Heart left ventricle (tissue), 16 donors: ENCODE measurements at regions of chr3 and their contacts with region 1.

Region 1: GRCh38 chr3:63405882-63406281 is 127.8 kb downstream of the SYNPR start:
- DNase-seq: no peak
- ATAC-seq: no peak
- H3K4me3 ChIP-seq: no peak overlapping the region
- H3K27ac ChIP-seq: no peak overlapping the region
- H3K4me1 ChIP-seq: no peaks in the 10 kb centered on the region
- H3K27me3 ChIP-seq: no peaks in the 10 kb centered on the region
- CTCF ChIP-seq: no peak
- POLR2A ChIP-seq: no peak

Region 2: DNA sequence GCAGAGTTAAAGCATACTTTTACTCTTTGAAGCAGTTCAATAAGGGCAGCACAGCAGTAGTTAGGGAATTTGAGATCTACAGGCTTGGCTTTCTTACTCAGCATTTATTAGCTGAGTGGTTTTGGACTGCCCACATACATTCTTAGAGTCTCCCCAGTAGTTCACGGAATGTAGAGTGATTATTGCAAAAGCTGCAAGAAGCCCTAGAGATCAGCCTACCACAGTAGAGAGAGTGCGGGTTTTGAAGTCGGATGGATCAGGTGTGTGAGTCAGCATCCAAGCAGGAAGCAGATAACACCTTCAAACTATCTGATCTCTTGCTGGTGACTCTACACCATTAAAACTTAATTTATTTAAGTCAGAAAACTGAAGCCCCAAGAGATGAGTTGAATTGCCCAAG is 44.1 kb after region 1 on chr3:
- intact Hi-C with region 1: no loop called
- DNase-seq: no peak
- ATAC-seq: no peak
- H3K4me3 ChIP-seq: no peak overlapping the region
- H3K27ac ChIP-seq: no peak overlapping the region
- H3K4me1 ChIP-seq: no peaks in the 10 kb centered on the region
- H3K27me3 ChIP-seq: no peaks in the 10 kb centered on the region
- CTCF ChIP-seq: no peak
- POLR2A ChIP-seq: no peak

Region 3: GRCh38 chr3:63470745-63471144 is 64.9 kb after region 1 on chr3:
- intact Hi-C with region 1: loop called in 1 of 10 experiments (anchors 2 kb)
- DNase-seq: no peak
- ATAC-seq: no peak
- H3K4me3 ChIP-seq: no peak overlapping the region
- H3K27ac ChIP-seq: no peak overlapping the region
- H3K4me1 ChIP-seq: no peaks in the 10 kb centered on the region
- H3K27me3 ChIP-seq: no peaks in the 10 kb centered on the region
- CTCF ChIP-seq: no peak
- POLR2A ChIP-seq: no peak